ENCODE measurements at regions of chr11 and their contacts with region 1.

Region 1: GRCh38 chr11:11157185-11157584 is 195.9 kb downstream of the CSNK2A3 start:
- DNase-seq: no peak
- H3K4me3 ChIP-seq: no peak overlapping the region
- H3K27ac ChIP-seq: no peak overlapping the region
- H3K4me1 ChIP-seq: no peaks in the 10 kb centered on the region
- H3K27me3 ChIP-seq: no peaks in the 10 kb centered on the region
- CTCF ChIP-seq: peak in 1 of 3 experiments; percentile 10
- POLR2A ChIP-seq: no peak

Region 2: DNA sequence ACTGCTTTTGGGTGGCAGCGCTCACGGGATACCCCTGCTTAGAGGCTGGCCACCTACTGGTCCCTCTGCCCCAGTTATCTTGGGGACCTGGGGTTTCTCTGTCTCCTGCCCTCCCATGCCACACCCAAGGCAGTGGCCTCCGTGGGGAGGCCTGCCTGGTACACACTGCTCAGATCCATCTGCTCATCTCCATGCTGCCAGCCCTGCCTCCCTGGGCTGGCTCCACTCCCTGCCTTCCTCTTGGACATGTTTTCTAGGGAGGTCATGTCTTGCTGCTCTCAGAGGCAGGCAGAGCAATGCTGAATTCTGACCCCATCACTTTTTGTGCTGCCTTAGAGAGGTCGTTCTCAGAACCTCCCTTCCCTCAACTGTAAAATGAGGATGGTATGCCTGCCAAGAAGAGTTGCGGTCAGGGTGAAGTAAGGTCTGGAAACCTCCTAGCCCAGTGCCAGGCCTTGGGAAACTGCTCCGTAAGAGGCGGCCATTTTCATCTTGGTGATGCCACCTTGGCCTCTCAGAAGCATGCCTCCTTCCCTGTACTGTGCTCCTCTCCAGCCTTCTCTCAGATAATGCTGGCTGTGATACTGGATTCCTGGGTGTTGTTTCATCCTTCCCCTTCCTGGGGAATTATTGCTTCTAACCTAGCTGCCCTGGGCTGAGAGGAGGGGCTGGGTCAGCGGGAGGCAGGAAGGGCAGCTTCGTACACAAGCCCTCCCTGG is 112.9 kb before region 1 on chr11:
- intact Hi-C with region 1: loop called (anchors 10 kb)
- DNase-seq: no peak
- H3K4me3 ChIP-seq: no peak overlapping the region
- H3K27ac ChIP-seq: no peak overlapping the region
- H3K4me1 ChIP-seq: peaks cover 17% of the 10 kb centered on the region
- H3K27me3 ChIP-seq: no peaks in the 10 kb centered on the region
- CTCF ChIP-seq: no peak
- POLR2A ChIP-seq: no peak

Region 3: GRCh38 chr11:11192541-11192940 is 35.4 kb after region 1 on chr11:
- intact Hi-C with region 1: no loop called
- DNase-seq: no peak
- H3K4me3 ChIP-seq: no peak overlapping the region
- H3K27ac ChIP-seq: no peak overlapping the region
- H3K4me1 ChIP-seq: no peaks in the 10 kb centered on the region
- H3K27me3 ChIP-seq: no peaks in the 10 kb centered on the region
- CTCF ChIP-seq: no peak
- POLR2A ChIP-seq: no peak